Sciatic nerve (tissue), 2 donors: ENCODE measurements at regions of chr19 and their contacts with region 1.

Region 1: DNA sequence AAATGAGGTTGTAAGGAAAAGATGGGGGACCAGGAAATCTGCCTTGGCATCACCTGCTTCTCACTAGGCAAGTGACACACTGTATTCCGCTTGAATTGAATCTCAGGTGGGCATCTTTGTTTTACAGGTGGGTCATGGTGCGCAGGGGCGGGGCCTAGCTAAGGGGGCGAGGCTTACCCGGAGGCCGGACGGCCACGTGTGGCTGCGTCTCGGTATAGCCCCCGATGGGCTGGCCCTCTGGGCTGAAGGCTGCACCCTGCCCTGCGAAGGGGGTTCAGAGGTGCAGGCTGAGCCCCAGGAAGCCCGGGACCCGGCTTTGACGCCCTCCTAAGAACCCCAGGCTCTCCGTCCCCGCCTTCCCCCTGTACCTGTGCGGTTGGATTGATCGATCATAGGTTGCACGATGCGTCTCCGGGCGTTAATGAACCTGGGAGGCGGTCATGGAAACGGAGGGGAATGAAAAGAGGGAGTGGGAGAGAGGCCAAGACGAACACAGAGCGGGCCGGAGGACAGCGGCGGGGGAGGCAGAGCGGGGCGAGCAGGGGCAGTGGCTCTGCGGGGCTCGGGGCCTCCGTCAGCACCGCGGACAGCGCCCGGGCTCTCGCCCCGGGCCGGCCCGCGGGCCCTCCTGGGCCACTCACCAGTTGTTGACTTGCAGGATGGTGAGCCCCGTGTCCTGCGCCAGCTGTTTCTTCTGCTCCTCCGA is 12.5 kb downstream of the MEIS3 start:
- DNase-seq: no peak
- ATAC-seq: no peak

Region 2: DNA sequence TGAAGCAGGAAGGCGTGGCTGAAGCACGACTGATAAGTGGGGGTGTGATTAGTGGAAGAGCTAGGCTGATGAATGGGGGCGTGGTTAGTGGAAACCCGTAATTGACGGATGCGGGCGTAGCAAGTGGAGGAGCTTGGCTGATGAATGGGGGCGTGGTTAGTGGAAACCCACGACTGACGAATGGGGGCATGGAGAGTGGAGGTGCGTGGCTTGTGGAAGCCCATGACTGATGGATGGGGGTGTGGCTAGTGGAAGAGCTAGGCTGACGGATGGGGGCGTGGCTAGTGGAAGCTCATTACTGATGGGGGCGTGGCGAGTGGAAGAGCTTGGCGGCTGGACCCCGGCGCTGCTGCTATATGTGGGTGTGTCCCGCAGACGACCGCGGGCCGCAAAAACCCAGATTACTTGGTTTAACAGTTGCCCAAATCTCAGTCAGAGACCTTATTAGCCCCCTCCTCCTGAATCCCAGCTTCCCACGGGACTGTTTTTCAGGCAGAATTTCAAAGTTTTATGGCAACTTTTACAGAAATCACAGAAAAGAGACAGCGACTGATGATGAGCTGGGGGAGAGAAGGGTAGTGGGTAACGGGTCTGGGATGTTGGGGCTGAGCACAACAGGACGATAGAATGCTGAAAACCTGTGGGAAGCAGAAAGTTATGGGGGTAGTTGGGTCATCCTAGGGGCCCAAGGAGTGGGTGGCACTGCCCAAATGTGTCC is 21.5 kb after region 1 on chr19:
- intact Hi-C with region 1: loop called (anchors 1 kb)
- DNase-seq: peak; percentile 90
- ATAC-seq: peak; percentile 94